AG04449 (cell line): ENCODE measurements at regions of chr19 and their contacts with region 1.

Region 1: DNA sequence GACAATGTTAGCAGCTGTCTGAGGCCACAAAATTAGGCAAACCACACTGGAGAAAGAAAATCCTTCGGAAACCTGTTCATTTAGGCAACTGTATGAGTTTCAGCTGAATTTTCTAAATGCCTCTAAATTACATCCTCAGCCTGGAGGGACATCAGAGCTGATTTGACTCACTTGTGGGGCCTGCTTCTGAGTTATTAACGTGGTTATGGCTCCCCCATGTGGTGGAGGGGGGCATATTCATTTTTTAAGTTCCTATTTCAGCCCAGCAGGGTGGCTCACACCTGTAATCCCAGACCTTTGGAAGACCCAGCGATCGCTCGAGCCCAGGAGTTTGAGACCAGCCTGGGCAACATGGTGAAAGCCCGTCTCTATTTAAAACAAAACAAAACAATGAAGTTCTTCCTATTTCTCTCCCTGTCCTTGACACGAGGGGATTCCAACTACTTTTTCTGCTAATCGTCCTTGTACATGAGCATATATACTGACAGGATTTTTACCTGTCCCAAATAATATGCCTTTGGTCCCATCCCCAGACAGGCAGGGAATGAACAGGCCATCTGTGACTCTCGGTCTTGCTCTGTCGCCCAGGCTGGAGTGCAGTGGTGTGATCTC is 31.5 kb upstream of the HIF3A start:
- DNase-seq: no peak
- H3K4me3 ChIP-seq: no peak overlapping the region
- CTCF ChIP-seq: peak; percentile 49

Region 2: GRCh38 chr19:46009530-46010510 is 255.5 kb before region 1 on chr19:
- CTCF ChIA-PET with region 1: interaction called, 29 read pairs
- POLR2A ChIA-PET with region 1: no interaction called
- DNase-seq: no peak
- H3K4me3 ChIP-seq: no peak overlapping the region
- CTCF ChIP-seq: peak; percentile 86

Region 3: GRCh38 chr19:46021531-46022041 is 243.7 kb before region 1 on chr19:
- CTCF ChIA-PET with region 1: interaction called, 207 read pairs
- POLR2A ChIA-PET with region 1: no interaction called
- DNase-seq: no peak
- H3K4me3 ChIP-seq: no peak overlapping the region
- CTCF ChIP-seq: no peak

Region 4: DNA sequence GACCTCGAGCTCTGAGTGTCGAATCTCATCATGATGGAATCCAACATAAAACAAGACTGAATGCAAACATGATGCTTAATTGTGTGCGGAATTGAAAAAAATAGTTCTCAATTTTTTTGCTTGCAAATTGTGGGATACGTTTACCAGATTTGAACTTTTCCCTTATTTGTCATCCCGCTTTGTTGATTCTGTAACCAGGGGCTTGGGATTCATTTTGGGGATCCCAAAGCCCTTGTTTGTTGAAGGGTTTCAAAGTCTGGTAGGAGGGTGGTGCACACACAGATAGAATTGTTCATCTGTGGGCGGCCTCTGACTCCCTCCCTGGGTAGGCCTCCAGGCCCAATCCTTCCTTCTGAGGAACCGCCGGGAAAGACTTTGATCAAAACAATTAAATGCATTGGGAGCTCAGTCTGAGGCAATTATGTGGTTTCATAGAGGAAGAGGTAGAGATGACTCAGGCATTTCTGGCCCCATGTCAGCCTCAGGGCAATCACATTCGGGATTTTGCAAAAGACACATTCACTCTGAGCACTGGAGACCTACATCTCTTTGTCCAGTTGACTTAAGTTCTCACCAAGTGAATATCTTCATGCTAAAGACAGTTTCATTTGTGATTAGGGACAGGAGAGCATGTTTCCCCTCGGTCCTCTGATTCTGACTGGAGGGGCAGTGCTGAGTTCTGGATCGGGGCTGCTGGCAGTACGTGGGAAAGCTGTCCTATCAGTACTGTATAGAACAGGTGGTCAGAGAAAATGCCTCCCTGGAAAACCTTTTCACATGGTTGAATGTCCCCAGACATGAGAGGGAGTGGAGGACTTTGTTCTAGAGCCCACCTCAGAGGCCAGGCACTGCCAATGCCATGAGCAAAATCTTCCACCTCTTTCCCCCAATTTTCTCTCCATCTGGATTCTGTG is 196.7 kb before region 1 on chr19:
- CTCF ChIA-PET with region 1: interaction called, 12 read pairs
- POLR2A ChIA-PET with region 1: no interaction called
- DNase-seq: peak; percentile 52
- H3K4me3 ChIP-seq: no peak overlapping the region
- CTCF ChIP-seq: no peak

Region 5: DNA sequence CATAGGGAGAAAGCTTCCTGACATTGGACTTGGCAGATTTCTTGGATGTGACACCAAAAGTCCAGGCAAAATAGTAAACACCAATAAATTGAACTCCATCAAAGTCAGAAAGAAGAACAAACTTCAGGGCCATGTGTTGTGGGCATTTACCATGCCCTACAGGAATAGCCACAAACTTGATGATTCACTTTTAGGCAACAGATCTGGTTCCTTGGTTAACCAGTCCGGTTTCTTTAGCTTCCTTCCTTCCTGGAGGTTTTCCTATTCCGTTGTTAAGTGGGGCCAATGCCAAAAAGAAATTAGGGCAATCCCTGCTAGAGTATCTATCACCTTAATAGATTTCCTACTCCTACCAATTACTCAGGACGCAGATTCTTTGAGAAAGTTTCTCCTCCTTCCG is 10.5 kb before region 1 on chr19:
- CTCF ChIA-PET with region 1: interaction called, 13 read pairs
- POLR2A ChIA-PET with region 1: no interaction called
- DNase-seq: no peak
- H3K4me3 ChIP-seq: no peak overlapping the region
- CTCF ChIP-seq: no peak